Caco-2 (cell line): ENCODE measurements at regions of chr1 and their contacts with region 1.

Region 1: GRCh38 chr1:174262349-174263241 is 103.3 kb downstream of the RABGAP1L start:
- DNase-seq: peak in 1 of 2 experiments; percentile 49
- H3K4me3 ChIP-seq: no peak overlapping the region
- H3K4me3 Mint-ChIP-seq: no peak overlapping the region
- H3K27ac Mint-ChIP-seq: no peak overlapping the region
- H3K4me1 ChIP-seq: 0 out of 2 replicates have a peak, but pooled peaks cover 6% of the 10 kb centered on the region
- H3K4me1 Mint-ChIP-seq: peaks cover 9% of the 10 kb centered on the region
- H3K27me3 ChIP-seq: no peaks in the 10 kb centered on the region; the same call in 1 of the 2 replicates
- H3K27me3 Mint-ChIP-seq: no peaks in the 10 kb centered on the region
- CTCF ChIP-seq: peak; percentile 58 to 70

Region 2: GRCh38 chr1:174114788-174115448 is 147.7 kb before region 1 on chr1:
- CTCF ChIA-PET with region 1: no interaction called
- POLR2A ChIA-PET with region 1: no interaction called
- intact Hi-C with region 1: no loop called
- DNase-seq: peak; percentile 69 to 78
- H3K4me3 ChIP-seq: no peak overlapping the region
- H3K4me3 Mint-ChIP-seq: no peak overlapping the region
- H3K27ac Mint-ChIP-seq: no peak overlapping the region
- H3K4me1 ChIP-seq: 0 out of 2 replicates have a peak, but pooled peaks cover 4% of the 10 kb centered on the region
- H3K4me1 Mint-ChIP-seq: peaks cover 8% of the 10 kb centered on the region
- H3K27me3 ChIP-seq: no peaks in the 10 kb centered on the region
- H3K27me3 Mint-ChIP-seq: no peaks in the 10 kb centered on the region
- CTCF ChIP-seq: peak; percentile 69 to 77

Region 3: GRCh38 chr1:174466614-174467013 is 204.0 kb after region 1 on chr1:
- CTCF ChIA-PET with region 1: interaction called, 3 read pairs
- POLR2A ChIA-PET with region 1: no interaction called
- intact Hi-C with region 1: loop called (anchors 2 kb)
- DNase-seq: no peak
- H3K4me3 ChIP-seq: no peak overlapping the region
- H3K4me3 Mint-ChIP-seq: no peak overlapping the region
- H3K27ac Mint-ChIP-seq: no peak overlapping the region
- H3K4me1 ChIP-seq: no peaks in the 10 kb centered on the region
- H3K4me1 Mint-ChIP-seq: no peaks in the 10 kb centered on the region
- H3K27me3 ChIP-seq: no peaks in the 10 kb centered on the region
- H3K27me3 Mint-ChIP-seq: no peaks in the 10 kb centered on the region
- CTCF ChIP-seq: no peak

Region 4: DNA sequence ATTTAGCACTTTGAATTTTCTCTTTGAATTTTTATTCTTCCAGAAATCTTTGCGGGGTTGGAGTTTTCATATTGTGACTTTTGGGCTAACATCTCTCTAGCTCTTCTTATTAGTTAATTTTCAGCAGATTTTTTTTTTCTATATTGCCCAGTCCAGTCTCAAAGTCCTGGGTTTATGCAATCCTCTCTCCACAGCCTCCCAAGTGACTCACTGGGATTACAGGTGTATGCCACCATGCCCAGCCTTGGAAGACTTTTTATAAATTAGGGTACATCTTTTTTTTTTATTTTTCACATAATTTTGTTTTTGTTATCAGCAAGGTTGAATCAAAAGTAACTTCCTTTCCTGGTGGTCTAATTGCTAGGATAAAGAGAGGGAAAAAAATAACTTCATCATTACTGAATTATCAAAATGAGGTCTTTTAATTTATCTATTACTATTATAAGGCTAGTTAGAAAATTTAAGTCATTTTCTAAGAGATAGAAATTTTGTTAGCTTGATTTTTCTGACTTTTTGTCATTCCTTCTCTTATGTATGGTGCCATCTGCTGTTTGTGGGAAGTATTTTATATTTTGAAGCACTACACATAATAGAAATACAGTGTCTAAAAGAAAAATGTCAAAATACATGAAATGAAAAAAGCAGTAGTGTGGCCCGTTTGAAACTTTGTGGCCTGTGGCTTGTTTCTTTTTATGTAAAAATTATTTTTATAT is 463.7 kb after region 1 on chr1:
- CTCF ChIA-PET with region 1: interaction called, 29 read pairs
- POLR2A ChIA-PET with region 1: no interaction called
- intact Hi-C with region 1: loop called (anchors 1 kb)
- DNase-seq: peak in 1 of 2 experiments; percentile 11
- H3K4me3 ChIP-seq: no peak overlapping the region
- H3K4me3 Mint-ChIP-seq: no peak overlapping the region
- H3K27ac Mint-ChIP-seq: no peak overlapping the region
- H3K4me1 ChIP-seq: no peaks in the 10 kb centered on the region
- H3K4me1 Mint-ChIP-seq: no peaks in the 10 kb centered on the region
- H3K27me3 ChIP-seq: no peaks in the 10 kb centered on the region
- H3K27me3 Mint-ChIP-seq: no peaks in the 10 kb centered on the region
- CTCF ChIP-seq: peak; percentile 24 to 50

Region 5: GRCh38 chr1:174743654-174744561 is 481.3 kb after region 1 on chr1:
- CTCF ChIA-PET with region 1: interaction called, 9 read pairs
- POLR2A ChIA-PET with region 1: no interaction called
- intact Hi-C with region 1: loop called (anchors 1 kb)
- DNase-seq: no peak
- H3K4me3 ChIP-seq: no peak overlapping the region
- H3K4me3 Mint-ChIP-seq: no peak overlapping the region
- H3K27ac Mint-ChIP-seq: no peak overlapping the region
- H3K4me1 ChIP-seq: no peaks in the 10 kb centered on the region
- H3K4me1 Mint-ChIP-seq: no peaks in the 10 kb centered on the region
- H3K27me3 ChIP-seq: no peaks in the 10 kb centered on the region
- H3K27me3 Mint-ChIP-seq: no peaks in the 10 kb centered on the region
- CTCF ChIP-seq: peak in 1 of 2 experiments; percentile 63